Endothelial cell of umbilical vein (primary cell): ENCODE measurements at regions of chr17 and their contacts with region 1.

Region 1: GRCh38 chr17:8118769-8119580 is 661 bp upstream of the ALOXE3 start:
- DNase-seq: peak; percentile 86
- H3K4me3 ChIP-seq: peak overlapping the region; percentile 49 to 88 (median 79)
- H3K27ac ChIP-seq: peak overlapping the region; percentile 10
- H3K4me1 ChIP-seq: peaks cover 31% of the 10 kb centered on the region
- H3K27me3 ChIP-seq: peaks cover 30 to 32% of the 10 kb centered on the region in 2 experiments
- CTCF ChIP-seq: peak; percentile 90 to 93
- POLR2A ChIP-seq: no peak

Region 2: GRCh38 chr17:7844292-7845154 is 274.5 kb before region 1 on chr17:
- CTCF ChIA-PET with region 1: no interaction called
- POLR2A ChIA-PET with region 1: no interaction called
- dilution Hi-C with region 1: no loop called
- intact Hi-C with region 1: loop called (anchors 5 kb)
- DNase-seq: peak; percentile 92
- H3K4me3 ChIP-seq: peak overlapping the region; percentile 45 to 71 (median 60)
- H3K27ac ChIP-seq: peak overlapping the region; percentile 99
- H3K4me1 ChIP-seq: peaks cover 14% of the 10 kb centered on the region
- H3K27me3 ChIP-seq: no peaks in the 10 kb centered on the region
- CTCF ChIP-seq: no peak
- POLR2A ChIP-seq: peak; percentile 52

Region 3: GRCh38 chr17:8073627-8074484 is 45.1 kb before region 1 on chr17:
- CTCF ChIA-PET with region 1: interaction called, 51 read pairs
- POLR2A ChIA-PET with region 1: no interaction called
- dilution Hi-C with region 1: no loop called
- intact Hi-C with region 1: no loop called
- DNase-seq: peak; percentile 59
- H3K4me3 ChIP-seq: no peak overlapping the region
- H3K27ac ChIP-seq: no peak overlapping the region
- H3K4me1 ChIP-seq: no peaks in the 10 kb centered on the region
- H3K27me3 ChIP-seq: peaks cover 35 to 38% of the 10 kb centered on the region in 2 experiments
- CTCF ChIP-seq: peak; percentile 92 to 98
- POLR2A ChIP-seq: no peak

Region 4: DNA sequence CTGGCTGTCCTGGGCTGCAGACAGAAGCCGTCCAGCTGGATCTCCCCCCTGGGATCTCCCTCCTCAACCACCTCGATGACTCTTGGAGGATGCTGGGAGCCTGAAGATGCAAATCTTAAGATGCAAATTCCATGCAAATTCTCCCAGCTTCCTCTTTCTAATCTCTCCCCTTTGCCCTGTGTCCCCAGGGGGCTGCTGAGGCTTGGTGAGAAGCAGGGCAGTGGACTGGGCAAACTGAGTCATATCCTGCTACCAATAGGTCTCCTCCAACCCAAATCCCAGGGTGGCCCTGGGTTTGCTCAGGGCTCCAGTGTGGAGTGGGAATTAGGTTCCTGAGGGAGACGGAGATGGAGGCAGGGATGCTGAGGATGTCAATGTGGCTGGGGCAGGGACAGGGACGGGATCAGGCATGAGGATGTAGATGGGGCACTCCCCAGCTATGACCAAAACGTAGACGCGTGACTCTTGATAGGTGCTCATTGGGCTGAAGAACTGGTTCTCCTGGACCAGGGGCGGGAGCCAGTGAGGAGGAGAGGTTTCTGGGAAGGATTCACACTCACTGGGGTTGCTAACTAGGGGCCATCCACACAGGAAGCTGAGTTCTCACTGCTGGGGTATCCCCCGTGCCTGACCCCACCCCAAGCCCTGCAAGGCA is 27.8 kb before region 1 on chr17:
- CTCF ChIA-PET with region 1: interaction called, 22 read pairs
- POLR2A ChIA-PET with region 1: no interaction called
- dilution Hi-C with region 1: no loop called
- intact Hi-C with region 1: loop called (anchors 1 kb)
- DNase-seq: no peak
- H3K4me3 ChIP-seq: no peak overlapping the region
- H3K27ac ChIP-seq: no peak overlapping the region
- H3K4me1 ChIP-seq: no peaks in the 10 kb centered on the region
- H3K27me3 ChIP-seq: peaks cover 2 to 12% of the 10 kb centered on the region in 2 experiments
- CTCF ChIP-seq: no peak
- POLR2A ChIP-seq: no peak

Region 5: GRCh38 chr17:8156246-8156992 is 37.4 kb after region 1 on chr17:
- CTCF ChIA-PET with region 1: interaction called, 10 read pairs
- POLR2A ChIA-PET with region 1: interaction called, 3 read pairs
- dilution Hi-C with region 1: no loop called
- intact Hi-C with region 1: loop called (anchors 1 kb)
- DNase-seq: peak; percentile 100
- H3K4me3 ChIP-seq: peak overlapping the region in 2 of 3 experiments; percentile 24 to 62
- H3K27ac ChIP-seq: peak overlapping the region; percentile 99
- H3K4me1 ChIP-seq: peaks cover 43% of the 10 kb centered on the region
- H3K27me3 ChIP-seq: no peaks in the 10 kb centered on the region
- CTCF ChIP-seq: no peak
- POLR2A ChIP-seq: no peak

Region 6: DNA sequence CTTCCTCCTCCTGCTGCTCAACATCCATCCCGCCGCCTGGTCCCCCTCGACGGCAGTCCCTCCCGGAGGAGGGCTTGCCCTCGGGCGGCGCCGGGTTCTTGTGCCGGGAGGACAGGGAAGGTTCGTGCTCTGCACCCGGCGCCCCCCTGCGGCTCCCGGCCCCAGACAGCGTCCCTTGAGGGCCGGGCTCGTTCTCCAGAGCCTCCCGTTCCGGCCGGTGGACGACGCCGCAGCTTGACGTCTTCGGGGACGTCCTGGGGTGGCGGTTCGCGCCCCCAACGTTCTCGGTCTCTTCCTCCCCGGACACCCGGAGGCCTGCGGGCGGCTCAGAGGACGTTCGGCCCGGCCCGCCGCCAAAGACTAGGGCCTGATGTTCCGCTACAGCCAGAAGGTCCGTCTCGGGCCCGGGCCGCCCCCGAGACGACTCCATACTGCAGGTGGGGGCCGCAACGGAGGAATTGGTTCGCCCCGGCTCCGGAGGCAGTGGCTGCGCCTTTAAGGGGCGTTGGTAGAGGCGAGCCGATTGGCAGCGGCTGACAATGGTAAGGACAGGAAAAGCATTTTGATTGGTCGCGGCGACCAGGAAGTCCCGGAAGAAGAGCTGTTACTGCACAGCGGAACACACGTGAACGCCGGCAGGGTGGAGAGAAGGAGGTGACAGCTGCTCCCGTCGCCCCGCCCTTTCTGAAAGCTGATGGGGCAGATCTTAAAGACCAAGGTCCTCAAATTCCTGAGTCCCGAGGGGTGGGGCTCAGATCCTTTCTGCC is 70.9 kb after region 1 on chr17 and contains the start of gene BORCS6:
- CTCF ChIA-PET with region 1: interaction called, 8 read pairs
- POLR2A ChIA-PET with region 1: no interaction called
- dilution Hi-C with region 1: no loop called
- intact Hi-C with region 1: loop called (anchors 1 kb)
- DNase-seq: peak; percentile 98
- H3K4me3 ChIP-seq: peak within 1 kb of the TSS; percentile 45 to 66 (median 49)
- H3K27ac ChIP-seq: peak within 1 kb of the TSS; percentile 65
- H3K4me1 ChIP-seq: peaks cover 27% of the 10 kb centered on the region
- H3K27me3 ChIP-seq: no peaks in the 10 kb centered on the region
- CTCF ChIP-seq: peak in 1 of 2 donors; percentile 5
- POLR2A ChIP-seq: no peak
- total RNA-seq, gene BORCS6: 8.3 and 9.0 TPM in 2 replicates

Region 7: GRCh38 chr17:8248751-8249607 is 130.0 kb after region 1 on chr17 and contains the start of gene PFAS:
- CTCF ChIA-PET with region 1: interaction called, 3 read pairs
- POLR2A ChIA-PET with region 1: no interaction called
- dilution Hi-C with region 1: no loop called
- intact Hi-C with region 1: loop called (anchors 1 kb)
- DNase-seq: peak; percentile 90
- H3K4me3 ChIP-seq: peak within 1 kb of the TSS; percentile 69 to 98 (median 80)
- H3K27ac ChIP-seq: peak within 1 kb of the TSS; percentile 73
- H3K4me1 ChIP-seq: peaks cover 14% of the 10 kb centered on the region
- H3K27me3 ChIP-seq: no peaks in the 10 kb centered on the region
- CTCF ChIP-seq: peak in 1 of 2 donors; percentile 6
- POLR2A ChIP-seq: peak; percentile 79
- total RNA-seq, gene PFAS: 84.1 and 108 TPM in 2 replicates

Region 8: GRCh38 chr17:8275421-8276290 is 156.7 kb after region 1 on chr17:
- CTCF ChIA-PET with region 1: no interaction called
- POLR2A ChIA-PET with region 1: no interaction called
- dilution Hi-C with region 1: no loop called
- intact Hi-C with region 1: no loop called
- DNase-seq: no peak
- H3K4me3 ChIP-seq: no peak overlapping the region
- H3K27ac ChIP-seq: no peak overlapping the region
- H3K4me1 ChIP-seq: no peaks in the 10 kb centered on the region
- H3K27me3 ChIP-seq: no peaks in the 10 kb centered on the region
- CTCF ChIP-seq: no peak
- POLR2A ChIP-seq: no peak